HEK293T (cell line): ENCODE measurements at regions of chr1 and their contacts with region 1.

Region 1: GRCh38 chr1:37859507-37860345 is at the start of gene MTF1:
- DNase-seq: peak; percentile 99

Region 2: DNA sequence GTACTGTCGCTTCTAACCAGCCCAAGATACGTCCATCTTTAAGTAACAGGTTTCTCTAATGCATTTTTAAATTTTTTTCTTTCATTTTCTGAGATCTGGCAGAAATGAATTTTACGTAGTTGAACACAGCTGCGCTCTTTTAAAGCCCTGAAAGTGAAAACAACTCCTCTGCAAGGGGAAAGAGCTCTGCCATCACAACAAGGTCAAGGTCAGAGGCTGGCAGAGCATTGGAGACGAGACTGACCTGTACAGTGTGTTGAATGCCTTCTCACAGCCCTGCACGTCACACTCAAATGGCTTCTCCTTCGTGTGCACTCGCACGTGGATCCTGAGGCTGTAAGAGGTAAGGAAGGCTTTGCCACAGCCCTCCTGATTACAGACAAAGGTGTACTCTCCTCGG is 20.1 kb before region 1 on chr1:
- CTCF ChIA-PET with region 1: interaction called, 5 read pairs
- POLR2A ChIA-PET with region 1: interaction called, 10 read pairs
- DNase-seq: no peak

Region 3: DNA sequence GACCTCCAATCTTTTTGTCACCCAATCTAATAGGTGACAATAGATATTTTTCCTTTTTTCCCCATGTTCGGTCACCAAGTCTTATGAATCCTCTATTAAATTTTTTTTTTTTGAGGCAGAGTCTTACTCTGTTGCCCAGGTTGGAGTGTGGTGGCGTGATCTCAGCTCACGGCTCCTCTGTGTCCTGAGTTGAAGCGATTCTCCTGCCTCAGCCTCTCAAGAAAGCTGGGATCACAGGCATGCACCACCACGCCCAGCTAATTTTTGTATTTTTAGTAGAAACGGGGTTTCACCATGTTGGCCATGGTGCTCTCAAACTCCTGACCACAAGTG is 42.1 kb after region 1 on chr1:
- CTCF ChIA-PET with region 1: no interaction called
- POLR2A ChIA-PET with region 1: no interaction called
- DNase-seq: no peak

Region 4: DNA sequence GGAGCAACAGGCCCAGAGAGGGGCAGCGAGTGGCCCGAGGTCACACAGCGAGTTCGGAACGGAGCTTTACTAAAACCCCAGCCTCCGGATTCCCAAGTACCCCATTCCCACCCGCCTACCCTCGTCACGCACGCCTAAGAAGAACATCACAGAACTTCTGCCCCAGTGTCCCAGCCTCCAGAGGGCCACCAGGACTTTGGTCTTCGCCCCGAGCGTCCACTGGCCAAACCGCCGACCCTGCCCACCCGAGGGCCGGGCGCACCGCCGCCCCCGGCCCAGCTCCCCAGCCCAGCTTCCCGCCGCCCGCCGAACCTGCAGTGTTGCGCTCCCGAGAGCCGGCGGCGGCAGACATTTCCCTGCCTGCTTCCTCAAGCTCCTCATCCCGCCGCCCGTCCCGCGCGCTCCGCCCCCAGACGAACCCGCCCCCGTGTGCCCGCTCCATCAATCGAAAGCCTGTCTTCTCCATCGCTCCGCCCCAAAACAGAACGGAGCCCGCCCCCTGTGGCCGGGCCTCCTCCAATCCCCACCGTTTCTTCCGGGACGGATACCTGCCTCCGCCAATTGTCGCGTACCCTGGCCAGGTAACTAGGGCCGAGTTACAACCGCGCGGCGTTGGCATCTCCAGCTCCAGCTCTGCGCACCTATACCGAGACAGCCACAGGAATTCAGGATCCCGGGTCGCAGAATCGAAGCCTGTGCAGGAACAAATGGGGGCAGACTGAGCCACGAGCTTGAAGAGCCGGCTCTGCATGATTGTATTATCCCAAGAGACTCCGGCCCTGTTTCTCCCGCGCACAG is 71.8 kb after region 1 on chr1:
- CTCF ChIA-PET with region 1: no interaction called
- POLR2A ChIA-PET with region 1: no interaction called
- DNase-seq: peak; percentile 95

Region 5: DNA sequence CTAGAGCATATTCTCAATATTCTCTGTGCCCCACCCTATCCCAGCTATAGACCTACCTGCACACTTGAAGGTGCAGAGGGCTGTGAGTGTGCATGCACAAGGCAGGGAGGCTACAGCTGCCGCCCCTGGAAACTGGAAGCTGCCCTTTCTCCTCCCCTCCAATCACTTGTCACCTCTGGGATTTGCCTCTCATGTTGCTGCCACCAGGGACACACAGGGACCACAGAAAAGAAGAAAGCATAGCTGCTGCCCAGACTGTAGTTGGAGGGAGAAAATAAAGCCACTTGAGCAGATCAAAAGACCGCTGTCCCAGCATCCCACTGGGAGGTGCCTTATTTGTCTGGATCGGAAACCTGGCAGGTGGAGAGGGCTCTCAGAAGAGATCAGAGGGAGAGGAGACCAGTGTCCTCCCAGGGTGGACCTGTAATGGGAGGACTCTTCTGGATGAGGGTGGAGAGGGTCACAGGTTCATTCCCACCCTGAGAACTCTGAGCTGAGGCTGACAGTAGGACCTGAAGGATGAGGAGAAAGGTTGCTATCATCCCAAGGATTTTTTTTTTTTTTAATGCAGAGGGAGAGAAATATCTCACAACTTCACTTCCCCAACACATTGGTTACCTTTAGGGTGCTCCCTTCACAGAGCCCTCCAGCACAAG is 94.7 kb after region 1 on chr1:
- CTCF ChIA-PET with region 1: no interaction called
- POLR2A ChIA-PET with region 1: no interaction called
- DNase-seq: no peak

Region 6: DNA sequence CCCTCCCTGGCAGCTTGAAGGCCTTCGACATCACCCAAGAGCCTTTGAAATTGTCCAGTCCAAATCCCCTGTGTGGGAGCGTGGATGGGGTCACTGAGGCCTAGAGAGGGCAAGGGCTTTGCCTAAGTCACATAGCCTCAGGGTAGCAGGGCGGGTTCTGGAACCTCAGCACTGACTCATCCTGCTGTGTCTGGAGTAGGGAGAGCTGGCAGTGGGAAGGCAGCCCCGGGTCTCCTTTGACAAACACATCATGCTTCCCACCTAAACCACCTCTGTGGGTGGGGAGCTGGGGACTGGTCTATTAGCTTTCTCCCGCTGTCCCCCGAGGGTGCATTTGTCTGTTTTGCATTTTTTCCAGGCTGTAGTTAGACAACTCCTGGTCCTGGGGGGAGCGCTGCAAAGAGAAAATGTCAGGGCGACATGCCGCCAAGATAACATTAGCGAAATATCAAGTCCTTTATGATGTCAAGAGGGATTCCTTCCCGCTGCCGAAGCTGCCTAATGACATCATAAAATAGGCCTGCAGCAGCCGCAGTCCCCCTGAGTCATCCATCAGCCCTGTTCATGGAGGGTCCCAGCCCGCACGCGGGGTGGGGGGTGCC is 263.8 kb after region 1 on chr1:
- CTCF ChIA-PET with region 1: no interaction called
- POLR2A ChIA-PET with region 1: no interaction called
- DNase-seq: no peak